AG04449 (cell line): ENCODE measurements at regions of chr1 and their contacts with region 1.

Region 1: GRCh38 chr1:62508187-62508758 is 71.4 kb downstream of the USP1 start:
- DNase-seq: peak; percentile 5
- H3K4me3 ChIP-seq: no peak overlapping the region
- CTCF ChIP-seq: peak; percentile 53

Region 2: GRCh38 chr1:62384276-62385005 is 123.8 kb before region 1 on chr1:
- CTCF ChIA-PET with region 1: no interaction called
- POLR2A ChIA-PET with region 1: no interaction called
- DNase-seq: peak; percentile 44
- H3K4me3 ChIP-seq: no peak overlapping the region
- CTCF ChIP-seq: no peak

Region 3: DNA sequence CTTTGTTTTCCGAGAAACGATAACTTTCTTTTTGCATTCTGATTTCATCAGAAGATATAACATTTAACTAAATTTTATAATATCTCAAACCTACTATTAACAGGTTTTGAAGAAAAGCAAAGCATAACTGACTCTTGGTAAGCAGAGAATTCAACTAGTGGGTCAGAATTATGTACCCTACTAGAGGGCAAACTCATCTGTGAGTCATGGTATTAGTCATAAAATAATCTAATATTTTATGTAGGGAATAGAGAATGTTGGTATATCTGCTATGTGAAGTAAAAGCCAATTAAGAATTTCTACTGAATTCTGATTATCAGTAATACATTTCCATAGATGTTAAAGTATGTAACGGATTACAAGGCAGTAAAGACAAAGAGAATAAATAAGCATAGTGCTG is 14.6 kb before region 1 on chr1:
- CTCF ChIA-PET with region 1: interaction called, 27 read pairs
- POLR2A ChIA-PET with region 1: no interaction called
- DNase-seq: no peak
- H3K4me3 ChIP-seq: no peak overlapping the region
- CTCF ChIP-seq: no peak

Region 4: GRCh38 chr1:62530516-62531154 is 22.4 kb after region 1 on chr1:
- CTCF ChIA-PET with region 1: interaction called, 24 read pairs
- POLR2A ChIA-PET with region 1: no interaction called
- DNase-seq: peak; percentile 5
- H3K4me3 ChIP-seq: no peak overlapping the region
- CTCF ChIP-seq: peak; percentile 86

Region 5: DNA sequence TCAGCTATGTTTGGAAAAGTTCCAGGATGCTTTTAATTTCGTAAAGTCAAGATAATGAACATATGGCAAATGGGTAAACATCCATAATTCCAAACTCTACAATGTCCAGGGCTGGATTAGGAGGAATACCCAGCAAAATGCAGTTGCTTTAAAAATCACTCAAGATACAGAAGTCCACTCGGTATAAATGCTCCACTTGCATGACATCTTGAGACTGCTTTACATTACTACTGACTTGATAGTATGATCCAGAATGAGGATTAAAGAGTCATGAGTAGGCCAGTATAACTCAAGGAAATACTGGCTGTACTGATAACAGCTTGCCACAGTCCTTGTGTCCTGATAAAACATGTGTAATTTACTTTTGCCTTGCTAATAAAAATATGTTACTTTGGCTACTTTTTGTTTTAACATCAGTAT is 30.8 kb after region 1 on chr1:
- CTCF ChIA-PET with region 1: interaction called, 11 read pairs
- POLR2A ChIA-PET with region 1: no interaction called
- DNase-seq: no peak
- H3K4me3 ChIP-seq: no peak overlapping the region
- CTCF ChIP-seq: no peak

Region 6: GRCh38 chr1:62725255-62725654 is 217.0 kb after region 1 on chr1:
- CTCF ChIA-PET with region 1: interaction called, 11 read pairs
- POLR2A ChIA-PET with region 1: no interaction called
- DNase-seq: peak; percentile 76
- H3K4me3 ChIP-seq: no peak overlapping the region
- CTCF ChIP-seq: no peak

Region 7: DNA sequence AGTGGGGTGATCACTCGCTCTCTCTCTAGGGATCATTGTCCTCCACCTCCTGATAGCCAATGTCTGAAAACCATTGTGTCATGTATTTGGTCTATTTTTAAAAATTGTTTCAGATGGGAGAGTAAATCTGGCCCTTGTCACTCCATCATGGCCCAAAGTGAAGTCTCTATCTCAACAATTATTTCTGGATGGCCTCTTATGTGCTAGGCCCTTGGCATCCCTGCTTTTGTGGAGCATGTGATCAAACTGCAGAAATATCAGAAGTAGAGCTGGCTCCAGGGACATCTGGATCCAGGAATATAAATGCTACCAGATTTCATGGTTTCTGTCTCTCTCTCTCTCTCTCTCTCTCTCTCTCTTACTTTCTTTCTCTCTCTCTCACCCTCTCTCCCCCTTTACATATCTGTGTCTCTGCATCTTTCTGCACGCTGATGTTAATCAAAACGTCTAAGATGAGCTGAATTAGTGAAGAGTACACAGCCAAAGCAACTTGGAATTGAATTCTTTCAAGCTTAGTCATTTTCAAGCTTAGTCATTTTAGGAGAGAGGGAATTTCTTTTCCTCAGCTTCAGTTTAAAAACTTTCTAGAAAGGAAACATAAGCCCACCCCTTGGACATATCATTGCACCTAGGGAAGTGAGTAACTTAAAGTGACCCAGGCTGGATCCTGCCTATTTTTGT is 227.4 kb after region 1 on chr1:
- CTCF ChIA-PET with region 1: interaction called, 10 read pairs
- POLR2A ChIA-PET with region 1: no interaction called
- DNase-seq: no peak
- H3K4me3 ChIP-seq: no peak overlapping the region
- CTCF ChIP-seq: no peak